Spleen (tissue), 13 donors: ENCODE measurements at regions of chr11 and their contacts with region 1.

Region 1: DNA sequence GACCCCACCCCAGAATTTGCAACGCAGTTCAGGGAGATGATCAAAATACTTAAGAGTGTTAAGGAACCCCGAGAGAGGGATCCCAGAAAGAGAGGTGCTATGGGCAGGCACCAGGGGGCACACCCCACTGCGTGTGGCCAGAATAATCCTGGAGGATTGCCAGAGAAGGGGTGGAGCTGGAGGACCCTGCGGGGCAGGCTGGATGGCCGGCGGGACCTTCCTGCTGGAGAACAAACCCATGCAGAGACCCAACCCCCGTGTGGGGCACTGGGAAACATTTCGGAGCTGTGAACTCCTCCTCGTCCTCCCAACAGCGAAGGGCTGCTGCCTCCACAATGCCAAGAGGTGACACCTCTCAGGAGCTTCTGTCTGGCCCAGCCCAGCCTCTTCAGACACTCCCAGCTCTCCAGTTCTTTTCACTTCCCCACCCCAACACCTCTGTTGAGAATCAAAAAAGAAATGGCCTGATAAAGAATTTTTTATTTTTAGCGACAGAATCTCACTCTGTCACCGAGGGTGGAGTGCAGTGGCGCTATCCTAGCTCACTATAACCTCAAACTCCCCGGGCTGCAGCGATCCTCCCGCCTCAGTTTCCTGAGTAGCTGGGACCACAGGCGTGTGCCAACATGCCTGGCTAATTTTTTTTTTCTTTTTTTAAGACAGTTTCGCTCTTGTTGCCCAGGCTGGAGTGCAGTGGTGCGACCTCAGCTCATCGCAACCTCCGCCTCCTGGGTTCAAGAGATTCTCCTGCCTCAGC is 25.6 kb downstream of the RHOD start:
- DNase-seq: no peak
- H3K4me3 ChIP-seq: peak overlapping the region in 1 of 8 donors; percentile 18
- H3K27ac ChIP-seq: no peak overlapping the region
- H3K4me1 ChIP-seq: peaks cover 0 to 16% (median 11%) of the 10 kb centered on the region in 6 donors
- H3K27me3 ChIP-seq: peaks cover 0 to 28% (median 0%) of the 10 kb centered on the region in 7 donors
- CTCF ChIP-seq: no peak
- POLR2A ChIP-seq: no peak

Region 2: DNA sequence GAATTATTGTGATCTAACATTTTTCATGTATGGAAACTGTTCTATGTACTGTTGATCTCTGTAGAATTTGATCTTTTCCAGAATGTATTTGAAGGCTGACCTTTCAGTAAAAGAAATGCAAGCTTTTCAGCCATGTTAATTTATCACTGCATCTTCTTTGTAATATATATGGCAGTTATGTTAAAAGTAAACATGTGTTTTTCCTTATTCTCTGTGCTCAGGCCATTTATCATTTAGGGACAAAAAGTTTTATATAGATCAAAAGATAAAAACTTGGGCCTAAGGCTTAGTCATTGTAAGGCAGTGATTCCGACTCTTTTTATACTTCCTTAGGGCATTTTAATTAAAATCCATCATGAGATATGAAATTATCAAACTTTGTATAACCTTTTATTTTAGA is 85.5 kb after region 1 on chr11:
- intact Hi-C with region 1: loop called (anchors 2 kb)
- DNase-seq: no peak
- H3K4me3 ChIP-seq: no peak overlapping the region
- H3K27ac ChIP-seq: peak overlapping the region in 1 of 8 donors; percentile 15
- H3K4me1 ChIP-seq: peaks cover 0 to 84% (median 32%) of the 10 kb centered on the region in 6 donors
- H3K27me3 ChIP-seq: no peaks in the 10 kb centered on the region
- CTCF ChIP-seq: no peak
- POLR2A ChIP-seq: no peak